AG04450 (cell line): ENCODE measurements at regions of chr1 and their contacts with region 1.

Region 1: DNA sequence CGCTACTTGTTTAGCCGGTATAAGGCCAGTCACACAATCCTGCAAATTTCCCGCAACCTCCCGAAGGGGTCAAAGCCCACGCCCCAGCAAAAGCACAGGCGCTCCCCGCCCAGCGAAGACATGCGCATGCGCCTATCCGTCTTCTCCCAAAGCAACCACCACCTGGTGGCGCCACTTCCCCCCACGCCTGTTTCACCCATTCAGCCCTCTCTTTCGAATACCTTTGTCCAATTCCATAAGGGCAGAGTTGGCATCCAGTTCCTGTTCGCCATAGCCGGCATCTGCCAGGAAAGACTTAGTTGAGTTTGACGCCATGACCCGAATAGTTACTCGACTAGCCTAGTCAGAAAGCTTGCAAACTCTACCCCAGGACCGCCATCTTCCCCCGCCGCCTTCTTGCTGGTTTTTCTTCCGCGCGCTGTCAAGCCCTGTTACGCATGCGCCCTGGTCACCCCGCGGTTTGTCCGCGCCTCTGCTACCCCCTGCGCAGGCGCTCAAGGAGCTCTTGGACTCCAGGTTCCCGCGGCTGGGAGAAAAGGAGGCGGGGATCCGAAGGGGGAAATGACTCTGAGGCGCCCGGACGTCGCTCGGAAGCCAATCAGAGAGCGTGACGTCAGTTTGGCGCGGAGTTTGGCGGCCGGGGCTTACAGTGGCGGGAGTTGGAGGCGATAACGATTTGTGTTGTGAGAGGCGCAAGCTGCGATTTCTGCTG is at the starts of genes DTL and INTS7:
- DNase-seq: peak; percentile 98
- H3K4me3 ChIP-seq: peak within 1 kb of the TSS; percentile 90
- H3K27ac ChIP-seq: peak within 1 kb of the TSS; percentile 59
- H3K27me3 ChIP-seq: no peaks in the 10 kb centered on the region
- CTCF ChIP-seq: peak; percentile 89
- polyA plus RNA-seq, gene DTL: 4.0 and 6.0 TPM in 2 replicates
- polyA plus RNA-seq, gene INTS7: 17.9 and 20.1 TPM in 2 replicates

Region 2: DNA sequence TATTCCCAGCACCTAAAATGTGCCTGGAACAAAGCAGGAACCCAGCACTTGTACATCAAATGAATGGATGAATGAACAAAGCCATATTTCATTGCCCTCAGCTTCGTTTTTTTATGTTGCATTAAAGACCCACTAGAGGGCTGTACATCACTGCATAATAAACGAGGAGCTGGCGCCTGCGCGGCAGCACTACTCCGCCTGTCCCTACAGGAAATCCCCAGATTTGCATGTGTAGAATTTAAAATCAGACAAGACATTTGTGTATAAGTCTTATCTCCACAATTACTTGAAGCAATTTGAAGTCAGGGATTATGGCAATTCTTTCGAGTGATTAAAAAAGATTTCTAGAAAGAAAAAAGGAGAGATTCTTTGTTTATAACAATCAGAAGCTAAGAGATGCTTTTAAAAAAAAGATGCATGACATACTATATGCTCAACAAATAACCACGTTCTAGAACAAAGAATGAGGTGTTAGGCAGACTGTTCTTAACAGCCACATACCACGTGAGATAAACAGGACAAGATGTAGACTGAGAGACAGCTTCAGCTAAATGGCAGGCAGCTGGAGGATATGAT is 354.4 kb before region 1 on chr1:
- CTCF ChIA-PET with region 1: interaction called, 304 read pairs
- POLR2A ChIA-PET with region 1: interaction called, 8 read pairs
- DNase-seq: peak; percentile 79
- H3K4me3 ChIP-seq: no peak overlapping the region
- H3K27ac ChIP-seq: no peak overlapping the region
- H3K27me3 ChIP-seq: peaks cover 6% of the 10 kb centered on the region
- CTCF ChIP-seq: peak; percentile 78

Region 3: DNA sequence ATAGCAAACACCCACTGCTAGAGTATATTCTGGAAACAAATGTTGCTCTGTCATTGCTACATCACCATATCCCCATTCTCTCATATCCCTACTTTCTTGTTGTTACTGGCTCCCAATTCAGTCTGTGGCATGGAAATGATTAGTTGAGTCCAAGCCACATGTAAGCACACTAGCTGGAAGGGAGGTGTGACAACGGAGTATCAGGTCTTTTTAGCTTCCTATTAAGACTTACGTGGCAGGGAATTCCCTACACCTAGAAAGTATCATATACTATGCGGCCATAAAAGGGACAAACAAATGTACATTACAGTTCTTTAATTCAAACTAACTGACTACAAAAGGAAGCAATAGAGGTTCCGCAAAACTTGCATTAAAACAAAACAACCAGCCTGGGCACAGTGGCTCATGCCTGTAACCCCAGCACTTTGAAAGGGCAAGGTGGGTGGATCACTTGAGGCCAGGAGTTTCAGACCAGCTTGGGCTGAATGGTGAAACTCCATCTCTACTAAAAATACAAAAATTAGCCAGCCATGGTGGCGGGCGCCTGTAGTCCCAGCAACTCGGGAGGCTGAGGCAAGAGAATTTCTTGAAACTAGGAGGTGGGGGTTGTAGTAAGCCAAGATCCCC is 48.5 kb before region 1 on chr1:
- CTCF ChIA-PET with region 1: interaction called, 13 read pairs
- POLR2A ChIA-PET with region 1: no interaction called
- DNase-seq: no peak
- H3K4me3 ChIP-seq: no peak overlapping the region
- H3K27ac ChIP-seq: no peak overlapping the region
- H3K27me3 ChIP-seq: no peaks in the 10 kb centered on the region
- CTCF ChIP-seq: no peak

Region 4: GRCh38 chr1:212045981-212046380 is 10.7 kb after region 1 on chr1:
- CTCF ChIA-PET with region 1: interaction called, 111 read pairs
- POLR2A ChIA-PET with region 1: interaction called, 3 read pairs
- DNase-seq: no peak
- H3K4me3 ChIP-seq: no peak overlapping the region
- H3K27ac ChIP-seq: no peak overlapping the region
- H3K27me3 ChIP-seq: no peaks in the 10 kb centered on the region
- CTCF ChIP-seq: no peak

Region 5: DNA sequence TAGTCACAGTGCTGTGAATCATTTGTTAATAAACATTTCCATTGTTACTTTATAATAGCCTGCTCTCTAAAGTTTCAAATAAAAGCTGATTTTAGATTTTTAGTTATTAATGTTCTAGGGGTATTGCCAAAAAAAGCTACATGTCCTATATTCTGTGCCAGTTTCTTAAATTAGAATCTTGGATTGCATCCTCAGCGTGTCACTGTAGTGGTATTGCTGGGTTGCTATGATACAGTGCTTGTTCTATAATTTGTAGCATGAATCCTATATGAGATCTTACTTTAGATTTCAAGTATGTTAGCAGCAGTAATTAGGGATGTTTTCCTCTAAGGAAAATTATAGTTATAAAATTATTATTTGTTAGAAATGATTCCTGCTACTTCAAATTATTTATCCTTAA is 266.3 kb after region 1 on chr1:
- CTCF ChIA-PET with region 1: interaction called, 10 read pairs
- POLR2A ChIA-PET with region 1: no interaction called
- DNase-seq: no peak
- H3K4me3 ChIP-seq: no peak overlapping the region
- H3K27ac ChIP-seq: no peak overlapping the region
- H3K27me3 ChIP-seq: no peaks in the 10 kb centered on the region
- CTCF ChIP-seq: no peak